Right ventricle myocardium inferior (tissue), 1 donor: ENCODE measurements at regions of chr7 and their contacts with region 1.

Region 1: GRCh38 chr7:83410989-83411591 is 237.8 kb downstream of the SEMA3E start:
- DNase-seq: no peak
- ATAC-seq: no peak

Region 2: DNA sequence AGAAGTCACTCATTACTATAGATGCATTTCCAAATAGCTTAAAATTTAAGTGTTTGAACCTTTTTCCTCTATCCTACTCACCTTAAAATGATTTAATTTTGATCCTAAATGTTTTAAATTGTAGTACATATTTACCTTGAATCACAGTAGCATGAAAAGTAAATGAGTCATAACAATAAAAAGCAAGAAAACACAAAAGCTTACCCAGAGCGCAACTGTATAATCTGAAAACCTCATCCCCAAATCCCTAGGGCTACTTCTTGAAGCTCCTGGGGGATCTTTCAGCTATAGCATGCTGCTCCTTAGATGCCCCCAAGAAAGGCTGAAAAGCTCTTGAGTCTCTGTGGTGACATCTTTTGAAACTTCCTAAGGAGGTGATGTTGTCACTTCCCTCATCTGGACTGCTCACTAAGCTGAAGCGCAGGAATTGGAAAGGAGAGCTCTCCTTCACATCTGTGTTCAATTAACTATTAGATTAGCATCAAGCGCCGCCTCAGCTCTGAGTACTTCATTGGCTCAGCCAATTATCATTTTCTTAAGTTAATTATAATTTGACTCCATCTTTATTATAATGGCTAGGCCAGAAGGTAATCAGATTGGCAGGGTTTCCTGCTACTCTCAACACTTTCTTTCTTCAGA is 177.6 kb after region 1 on chr7:
- intact Hi-C with region 1: no loop called
- DNase-seq: no peak
- ATAC-seq: no peak

Region 3: GRCh38 chr7:83655951-83656556 is 245.0 kb after region 1 on chr7:
- intact Hi-C with region 1: loop called (anchors 5 kb)
- DNase-seq: no peak
- ATAC-seq: no peak